Activated CD8-positive, alpha-beta memory T cell treated with anti-CD3 and anti-CD28 coated beads, Interleukin-2, amount 10 ng/mL, durations not matched to agents 7 days and 5 days (primary cell): ENCODE measurements at regions of chr1 and their contacts with region 1.

Region 1: DNA sequence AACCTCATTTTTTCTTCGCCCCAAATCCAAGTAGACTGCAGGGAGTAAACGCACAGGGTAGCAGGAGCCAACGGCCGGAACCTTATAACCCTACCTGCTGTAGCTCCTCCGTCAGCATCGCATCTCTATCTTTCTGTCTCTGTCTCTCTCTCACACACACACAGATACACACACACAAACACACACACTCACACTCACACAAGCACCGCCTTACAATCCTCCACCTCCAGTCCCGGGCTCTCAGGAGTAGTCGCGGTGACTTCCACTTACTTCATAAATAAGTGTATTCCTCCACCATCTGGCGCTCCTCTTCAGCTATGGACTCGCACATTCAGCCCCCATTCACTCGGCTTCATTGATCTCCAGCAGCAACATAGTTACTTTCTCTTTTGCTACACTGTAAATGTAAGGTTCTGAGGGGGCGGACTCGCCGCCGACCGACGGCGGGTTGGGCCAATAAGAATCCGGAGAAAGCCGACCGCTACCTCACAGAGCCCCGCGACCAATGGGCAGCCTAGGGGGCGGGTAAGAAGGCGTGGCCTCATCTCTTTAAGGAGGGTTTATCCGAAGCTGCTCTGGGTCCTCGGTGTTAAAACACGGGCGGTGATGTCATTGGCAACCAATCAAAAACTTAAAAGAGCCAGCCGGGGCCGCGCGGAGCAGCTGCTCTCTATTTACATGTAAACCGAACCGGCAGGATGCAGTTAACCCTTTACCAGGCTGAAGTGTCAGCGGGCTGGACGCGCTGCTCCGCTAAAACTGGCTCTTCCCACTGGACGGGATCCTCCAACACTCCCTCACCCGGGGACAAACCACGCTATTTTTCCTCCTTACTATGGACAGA is at the start of gene DUSP10:
- DNase-seq: peak; percentile 100
- ATAC-seq: peak; percentile 85
- H3K4me3 Mint-ChIP-seq: no peak within 1 kb of the TSS
- H3K27ac Mint-ChIP-seq: no peak within 1 kb of the TSS
- H3K4me1 Mint-ChIP-seq: peaks cover 28% of the 10 kb centered on the region
- H3K27me3 Mint-ChIP-seq: no peaks in the 10 kb centered on the region
- total RNA-seq, gene DUSP10: 14.3 to 46.3 TPM

Region 2: GRCh38 chr1:221478050-221478949 is 263.6 kb before region 1 on chr1:
- CTCF ChIA-PET with region 1: interaction called, 27 read pairs
- DNase-seq: peak; percentile 67
- ATAC-seq: peak; percentile 79
- H3K4me3 Mint-ChIP-seq: no peak overlapping the region
- H3K27ac Mint-ChIP-seq: no peak overlapping the region
- H3K4me1 Mint-ChIP-seq: peaks cover 2% of the 10 kb centered on the region
- H3K27me3 Mint-ChIP-seq: peaks cover 6% of the 10 kb centered on the region

Region 3: DNA sequence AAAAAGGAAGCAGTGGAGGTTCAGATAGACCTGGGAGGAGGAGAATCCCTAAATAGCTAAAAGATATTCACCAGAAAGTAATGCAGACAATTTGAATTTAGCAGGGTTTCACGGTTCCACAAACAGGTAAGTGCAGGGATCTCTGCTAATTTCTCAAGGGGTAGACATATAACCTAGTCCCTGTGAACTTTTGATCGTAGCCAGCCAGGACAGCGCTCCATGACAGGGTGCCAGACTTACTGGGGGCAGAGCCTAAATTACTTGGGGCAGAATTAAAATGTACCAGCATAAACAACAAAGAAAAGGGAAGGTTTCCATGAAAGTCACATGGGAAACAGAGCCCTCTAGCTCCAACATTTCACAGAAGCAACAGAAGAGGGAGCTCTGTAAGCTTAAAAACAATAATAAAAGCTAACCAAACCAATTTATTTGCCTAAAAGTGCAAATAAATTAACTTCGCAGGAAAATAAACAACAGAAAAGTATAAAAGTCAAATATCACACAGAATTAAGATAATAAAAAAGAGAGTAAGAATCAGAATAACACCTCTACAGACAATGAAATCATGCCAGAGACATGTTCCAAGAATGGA is 198.3 kb before region 1 on chr1:
- CTCF ChIA-PET with region 1: interaction called, 10 read pairs
- DNase-seq: no peak
- ATAC-seq: no peak
- H3K4me3 Mint-ChIP-seq: no peak overlapping the region
- H3K27ac Mint-ChIP-seq: no peak overlapping the region
- H3K4me1 Mint-ChIP-seq: no peaks in the 10 kb centered on the region
- H3K27me3 Mint-ChIP-seq: peaks cover 15% of the 10 kb centered on the region

Region 4: GRCh38 chr1:221708987-221709386 is 32.9 kb before region 1 on chr1:
- CTCF ChIA-PET with region 1: interaction called, 92 read pairs
- DNase-seq: peak; percentile 62
- ATAC-seq: peak; percentile 7
- H3K4me3 Mint-ChIP-seq: no peak overlapping the region
- H3K27ac Mint-ChIP-seq: peak overlapping the region; percentile 83
- H3K4me1 Mint-ChIP-seq: peaks cover 67% of the 10 kb centered on the region
- H3K27me3 Mint-ChIP-seq: no peaks in the 10 kb centered on the region

Region 5: GRCh38 chr1:221725735-221726672 is 15.9 kb before region 1 on chr1:
- CTCF ChIA-PET with region 1: interaction called, 14 read pairs
- DNase-seq: no peak
- ATAC-seq: peak; percentile 80
- H3K4me3 Mint-ChIP-seq: peak overlapping the region; percentile 60
- H3K27ac Mint-ChIP-seq: peak overlapping the region; percentile 92
- H3K4me1 Mint-ChIP-seq: peaks cover 75% of the 10 kb centered on the region
- H3K27me3 Mint-ChIP-seq: no peaks in the 10 kb centered on the region

Region 6: DNA sequence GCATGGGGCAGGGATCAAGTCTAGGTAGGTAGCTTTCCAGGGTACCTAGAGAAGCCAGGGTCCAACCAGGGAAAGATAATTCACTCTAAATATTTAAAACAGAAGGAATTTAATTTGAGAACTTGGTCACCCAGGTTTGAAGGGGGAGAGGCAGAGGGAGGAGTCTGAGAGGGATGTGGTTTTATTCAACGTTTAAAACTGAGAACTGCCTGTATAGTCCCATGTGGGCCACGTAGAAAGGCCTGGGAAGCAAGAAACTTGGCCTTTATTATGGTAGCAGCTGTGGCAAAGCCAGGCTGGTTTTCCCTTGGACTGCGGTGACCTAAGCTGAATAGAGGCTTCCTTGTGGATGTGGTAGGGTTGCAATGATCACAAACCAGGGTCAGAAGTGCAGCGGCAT is 42.0 kb after region 1 on chr1:
- CTCF ChIA-PET with region 1: interaction called, 14 read pairs
- DNase-seq: peak; percentile 50
- ATAC-seq: peak; percentile 80
- H3K4me3 Mint-ChIP-seq: peak overlapping the region; percentile 7
- H3K27ac Mint-ChIP-seq: peak overlapping the region; percentile 34
- H3K4me1 Mint-ChIP-seq: peaks cover 55% of the 10 kb centered on the region
- H3K27me3 Mint-ChIP-seq: no peaks in the 10 kb centered on the region

Region 7: DNA sequence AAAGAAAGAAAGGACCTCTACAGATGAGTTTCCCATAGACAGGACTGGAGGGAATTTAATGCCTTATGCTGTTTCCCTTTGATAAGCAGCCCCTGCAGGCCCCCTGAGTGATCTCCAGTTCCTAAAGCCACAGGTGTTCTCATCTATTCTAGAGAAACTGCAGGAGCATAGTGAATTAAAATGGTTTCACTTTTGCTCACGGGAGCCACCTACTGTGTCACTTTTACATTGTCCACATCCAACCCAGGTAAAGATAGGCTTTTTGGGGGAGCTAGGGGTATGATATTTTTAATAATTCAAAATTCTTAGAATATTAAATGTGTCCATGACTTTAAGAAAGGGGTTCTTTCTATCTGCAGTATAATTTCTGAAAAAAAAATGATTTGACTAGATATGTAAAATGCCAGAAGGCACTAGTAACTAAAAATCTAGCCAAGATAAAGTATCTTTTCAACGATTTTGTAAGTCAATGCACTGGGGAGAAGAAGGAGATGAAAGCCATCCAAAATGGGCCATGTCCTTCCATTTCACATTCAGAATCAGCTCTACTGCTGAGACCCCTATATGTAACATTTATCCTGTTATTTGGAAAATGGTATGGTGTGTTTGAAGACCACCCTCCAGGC is 267.3 kb after region 1 on chr1:
- CTCF ChIA-PET with region 1: interaction called, 17 read pairs
- DNase-seq: peak; percentile 51
- ATAC-seq: peak; percentile 81
- H3K4me3 Mint-ChIP-seq: no peak overlapping the region
- H3K27ac Mint-ChIP-seq: no peak overlapping the region
- H3K4me1 Mint-ChIP-seq: peaks cover 5% of the 10 kb centered on the region
- H3K27me3 Mint-ChIP-seq: peaks cover 8% of the 10 kb centered on the region